Calu3 (cell line): ENCODE measurements at regions of chr19 and their contacts with region 1.

Region 1: GRCh38 chr19:42166316-42166715 is 34.1 kb upstream of the POU2F2 start:
- DNase-seq: peak; percentile 82
- H3K4me3 Mint-ChIP-seq: no peak overlapping the region
- H3K27ac Mint-ChIP-seq: peak overlapping the region; percentile 21
- H3K4me1 Mint-ChIP-seq: peaks cover 29% of the 10 kb centered on the region
- H3K27me3 Mint-ChIP-seq: peaks cover 14% of the 10 kb centered on the region
- CTCF ChIP-seq: no peak

Region 2: DNA sequence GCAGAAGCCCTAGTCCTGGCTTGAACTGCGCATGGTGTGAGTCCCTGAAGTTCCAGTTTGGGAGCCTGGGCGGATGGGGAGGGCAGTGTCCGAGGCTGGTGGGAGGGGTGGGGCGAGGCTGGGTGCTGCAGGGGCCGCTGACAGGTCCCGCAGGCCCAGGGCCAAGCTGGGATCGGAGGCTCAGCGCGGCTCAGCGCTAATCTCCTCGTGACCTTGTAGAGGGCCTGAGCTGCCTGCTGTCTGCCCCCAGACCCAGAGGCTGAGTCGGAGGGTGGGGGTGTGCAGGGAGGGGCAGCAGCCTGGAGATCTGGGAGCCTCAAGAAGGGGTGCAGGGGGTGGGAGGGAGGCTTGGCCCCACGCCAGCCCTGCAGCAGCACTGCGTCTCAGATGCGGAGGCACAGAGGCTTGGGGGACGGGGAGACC is 175.3 kb before region 1 on chr19:
- CTCF ChIA-PET with region 1: no interaction called
- intact Hi-C with region 1: no loop called
- DNase-seq: peak; percentile 25
- H3K4me3 Mint-ChIP-seq: no peak overlapping the region
- H3K27ac Mint-ChIP-seq: no peak overlapping the region
- H3K4me1 Mint-ChIP-seq: no peaks in the 10 kb centered on the region
- H3K27me3 Mint-ChIP-seq: peaks cover 18% of the 10 kb centered on the region
- CTCF ChIP-seq: no peak

Region 3: DNA sequence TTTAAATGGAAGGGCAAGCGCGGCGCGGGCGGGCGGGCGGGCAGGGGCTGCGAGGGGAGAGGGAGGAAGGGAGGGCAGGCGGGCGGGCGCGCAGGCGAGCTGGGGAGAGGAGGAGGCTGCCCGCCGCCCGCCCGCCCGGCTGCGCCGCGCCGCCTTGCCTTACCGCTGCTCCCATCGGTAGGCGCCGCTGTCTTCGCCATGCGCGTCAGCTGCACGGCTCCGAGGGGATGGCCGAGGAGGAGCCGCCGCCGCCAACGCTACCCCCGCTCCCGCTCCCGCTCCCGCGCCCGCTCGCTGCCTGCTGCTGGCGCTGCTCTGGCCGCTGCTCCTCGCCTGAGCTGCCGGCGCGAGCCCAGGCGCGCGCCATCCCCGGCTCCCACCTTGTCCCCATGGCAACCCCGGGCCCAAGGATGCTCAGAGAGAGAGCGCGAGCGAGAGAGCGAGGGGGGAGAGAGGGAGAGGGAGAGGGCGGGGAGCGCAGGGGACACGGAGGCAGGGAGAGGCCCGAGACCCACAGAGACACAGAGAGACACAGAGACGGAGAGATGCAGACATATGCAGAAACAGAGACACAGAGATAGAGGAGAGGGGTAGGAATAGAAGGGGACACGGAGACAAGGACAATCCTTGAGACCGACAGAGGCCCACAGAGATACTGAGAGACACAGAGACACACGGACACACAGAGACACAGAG is 10.8 kb after region 1 on chr19:
- CTCF ChIA-PET with region 1: interaction called, 14 read pairs
- intact Hi-C with region 1: no loop called
- DNase-seq: peak; percentile 90
- H3K4me3 Mint-ChIP-seq: no peak overlapping the region
- H3K27ac Mint-ChIP-seq: no peak overlapping the region
- H3K4me1 Mint-ChIP-seq: peaks cover 20% of the 10 kb centered on the region
- H3K27me3 Mint-ChIP-seq: peaks cover 8% of the 10 kb centered on the region
- CTCF ChIP-seq: peak; percentile 26

Region 4: DNA sequence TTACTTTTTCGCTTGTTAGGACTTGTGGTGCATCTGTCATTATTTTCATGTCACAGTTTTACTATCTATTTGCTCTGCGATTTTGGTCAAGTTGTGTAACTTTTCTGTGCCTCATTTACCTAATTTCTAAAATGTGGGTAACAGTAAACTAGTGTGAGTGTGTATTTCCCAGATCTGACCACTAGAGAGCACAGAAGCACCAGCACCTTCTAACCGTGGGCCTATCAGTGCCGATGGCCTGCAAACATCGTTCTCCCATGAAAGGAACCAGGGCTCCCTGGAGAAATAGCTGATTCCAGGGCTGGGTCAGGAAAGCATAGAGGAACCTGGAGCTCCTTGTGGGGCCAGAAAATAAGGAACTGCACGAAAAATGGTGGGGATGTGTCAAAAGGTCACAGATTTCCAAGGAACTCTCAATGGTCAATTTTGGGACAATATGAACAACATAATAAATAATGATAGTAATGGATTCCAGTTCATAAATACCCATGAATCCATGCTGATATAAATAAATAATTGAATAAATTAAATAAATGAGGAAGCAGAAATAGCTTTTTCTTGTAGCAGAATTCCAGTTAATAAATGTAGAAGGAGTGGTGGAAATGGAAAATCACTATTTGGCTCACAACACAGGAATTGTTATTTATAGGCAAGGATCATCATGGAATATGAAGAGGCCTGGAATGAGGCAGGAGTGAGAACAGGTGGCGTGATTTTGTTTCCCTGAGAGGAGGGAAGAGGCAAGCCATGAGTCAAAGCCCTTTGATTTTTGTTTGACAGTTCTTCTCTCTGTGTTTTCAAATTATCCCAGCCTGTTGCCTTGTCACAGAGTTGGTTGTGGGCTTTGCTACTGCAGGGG is 397.3 kb after region 1 on chr19:
- CTCF ChIA-PET with region 1: no interaction called
- intact Hi-C with region 1: no loop called
- DNase-seq: peak; percentile 54
- H3K4me3 Mint-ChIP-seq: no peak overlapping the region
- H3K27ac Mint-ChIP-seq: no peak overlapping the region
- H3K4me1 Mint-ChIP-seq: no peaks in the 10 kb centered on the region
- H3K27me3 Mint-ChIP-seq: peaks cover 70% of the 10 kb centered on the region
- CTCF ChIP-seq: peak; percentile 20